ENCODE measurements at regions of chr3 and their contacts with region 1.

Region 1: GRCh38 chr3:185176750-185177359 is 24.0 kb upstream of the C3orf70 start:
- DNase-seq: no peak
- ATAC-seq: peak in 1 of 2 donors; percentile 47
- H3K4me3 ChIP-seq: no peak overlapping the region
- H3K27ac ChIP-seq: no peak overlapping the region
- H3K4me1 ChIP-seq: peaks cover 8% of the 10 kb centered on the region
- H3K27me3 ChIP-seq: no peaks in the 10 kb centered on the region
- CTCF ChIP-seq: peak; percentile 70

Region 2: DNA sequence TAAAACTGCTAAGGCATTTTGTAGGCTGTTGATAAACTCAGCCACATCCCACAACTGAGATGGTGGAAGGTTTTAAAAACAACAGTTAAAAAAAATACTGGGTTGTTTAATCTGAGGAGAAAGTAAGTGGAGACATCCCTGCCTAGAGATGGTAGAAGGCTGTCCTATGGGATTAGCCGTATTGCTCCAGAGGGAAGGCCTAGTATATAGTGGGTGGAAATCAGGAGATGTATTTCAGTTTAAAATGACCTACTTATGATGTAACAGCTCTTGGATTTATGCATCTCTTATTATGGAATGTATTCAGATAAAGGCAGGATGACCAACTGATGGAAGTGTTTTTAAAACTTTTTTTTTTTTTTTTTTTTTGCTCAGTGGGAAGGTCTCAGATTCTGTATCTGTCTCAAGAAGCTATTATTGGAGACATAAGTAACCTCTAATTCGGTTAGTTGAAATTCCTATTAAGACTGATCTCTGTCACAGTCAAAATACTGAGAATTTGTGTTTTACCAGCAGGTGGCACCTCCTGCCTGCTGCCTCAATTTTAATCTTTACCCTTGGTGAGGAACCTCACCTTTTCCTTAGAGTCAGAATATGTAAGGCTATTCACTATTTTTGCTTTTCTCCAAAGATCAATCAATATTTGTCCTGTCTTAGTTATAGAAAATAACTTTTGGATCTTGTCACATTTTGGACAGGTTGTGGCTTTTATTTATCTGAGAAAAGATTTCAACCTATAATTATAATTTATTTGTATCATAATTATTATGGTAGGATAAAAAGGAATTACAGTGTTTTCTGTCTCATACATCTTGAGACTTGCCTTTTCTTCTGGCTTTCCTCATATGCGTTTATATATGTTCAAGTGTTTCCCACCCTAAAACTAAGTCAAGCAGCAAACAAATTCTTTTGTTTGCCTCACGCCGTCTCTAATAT is 301.9 kb before region 1 on chr3:
- intact Hi-C with region 1: loop called (anchors 10 kb)
- DNase-seq: no peak
- ATAC-seq: no peak
- H3K4me3 ChIP-seq: no peak overlapping the region
- H3K27ac ChIP-seq: no peak overlapping the region
- H3K4me1 ChIP-seq: no peaks in the 10 kb centered on the region
- H3K27me3 ChIP-seq: no peaks in the 10 kb centered on the region
- CTCF ChIP-seq: peak; percentile 41